KBM-7 (cell line): ENCODE measurements at regions of chr1 and their contacts with region 1.

Region 1: DNA sequence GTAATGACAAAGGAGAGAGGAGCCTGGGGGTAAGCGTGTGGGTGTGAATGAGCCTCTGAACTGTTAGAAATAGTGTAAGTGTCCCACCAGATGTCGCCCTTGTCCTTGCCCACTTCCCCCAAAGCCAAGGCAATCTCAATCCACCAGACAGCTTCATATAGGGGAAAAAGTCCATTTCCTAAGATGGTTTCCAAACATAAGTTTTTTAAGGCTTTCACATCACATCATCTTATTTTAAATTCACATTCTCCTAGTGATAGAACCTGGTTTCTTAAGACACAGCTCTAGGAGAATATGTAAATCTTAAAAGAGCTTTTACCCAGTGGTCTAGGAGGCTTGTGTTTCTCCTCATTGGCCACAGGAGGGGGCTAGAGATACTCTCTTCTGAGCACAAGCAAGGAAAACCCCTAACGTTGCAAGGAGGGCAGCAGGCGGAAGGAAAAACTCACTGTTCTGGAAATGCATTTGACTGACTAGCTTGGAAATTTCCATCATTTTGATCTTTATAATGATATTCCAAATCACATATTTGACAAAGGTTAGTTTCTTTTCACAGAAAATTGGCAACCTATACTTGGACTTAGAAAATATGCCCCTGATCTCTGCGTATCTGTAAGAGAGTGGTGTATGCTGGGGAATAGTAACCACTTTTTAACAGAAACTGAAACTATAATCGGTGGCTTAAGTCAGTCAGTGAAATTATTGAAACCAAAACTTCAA is 51.9 kb upstream of the LPAR3 start:
- DNase-seq: peak; percentile 82

Region 2: DNA sequence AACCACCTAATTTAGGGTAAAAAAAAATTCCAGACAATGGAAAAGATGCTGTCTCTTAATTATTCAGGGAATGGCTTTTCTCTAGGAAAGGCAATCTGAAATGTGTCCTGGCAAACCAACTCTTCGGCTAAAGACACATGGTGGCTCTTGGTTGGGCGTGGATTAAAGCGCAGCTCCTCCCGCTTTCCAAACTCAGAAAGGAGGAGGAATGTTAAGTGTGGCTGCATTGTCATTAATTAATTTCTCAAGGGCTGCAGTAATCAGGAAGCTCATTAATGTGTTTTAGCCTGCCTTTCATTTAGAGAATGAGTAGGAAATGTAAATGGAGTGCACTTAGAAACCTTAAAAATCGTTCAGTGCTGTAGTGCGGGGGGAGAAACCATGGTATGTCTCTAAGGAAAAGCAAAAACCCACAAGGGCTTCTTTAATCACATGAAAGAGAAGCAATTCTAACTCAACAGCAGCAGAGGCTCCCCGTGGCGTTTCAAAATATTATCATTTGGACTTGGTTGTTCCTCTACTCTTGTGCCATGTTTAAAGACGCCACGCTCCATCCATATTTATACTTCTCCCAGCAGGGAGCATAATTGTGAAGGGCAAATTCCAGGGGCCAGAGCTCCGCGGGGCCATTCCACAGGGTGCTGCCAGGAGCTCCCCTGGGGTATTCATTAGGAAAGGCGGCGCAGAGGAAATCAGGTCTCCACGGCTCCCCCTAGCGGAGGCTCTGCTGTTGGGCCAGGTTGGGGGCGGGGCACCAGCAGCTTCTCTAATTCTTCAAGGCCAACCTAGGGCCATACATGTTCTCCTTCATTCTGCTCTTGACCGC is 162.8 kb before region 1 on chr1:
- in situ Hi-C with region 1: loop called (anchors 25 kb)
- DNase-seq: peak; percentile 88